Panc1 (cell line): ENCODE measurements at regions of chr13 and their contacts with region 1.

Region 1: GRCh38 chr13:48580185-48580803 is 47.4 kb upstream of the RCBTB2 start:
- DNase-seq: peak; percentile 45
- ATAC-seq: peak; percentile 65; the same call in 1 of the 2 replicates
- H3K4me3 ChIP-seq: no peak overlapping the region
- H3K27ac ChIP-seq: no peak overlapping the region
- H3K4me1 ChIP-seq: peaks cover 6% of the 10 kb centered on the region; the same call in 1 of the 2 replicates
- H3K27me3 ChIP-seq: no peaks in the 10 kb centered on the region
- CTCF ChIP-seq: peak; percentile 67; the same call in 1 of the 2 replicates

Region 2: DNA sequence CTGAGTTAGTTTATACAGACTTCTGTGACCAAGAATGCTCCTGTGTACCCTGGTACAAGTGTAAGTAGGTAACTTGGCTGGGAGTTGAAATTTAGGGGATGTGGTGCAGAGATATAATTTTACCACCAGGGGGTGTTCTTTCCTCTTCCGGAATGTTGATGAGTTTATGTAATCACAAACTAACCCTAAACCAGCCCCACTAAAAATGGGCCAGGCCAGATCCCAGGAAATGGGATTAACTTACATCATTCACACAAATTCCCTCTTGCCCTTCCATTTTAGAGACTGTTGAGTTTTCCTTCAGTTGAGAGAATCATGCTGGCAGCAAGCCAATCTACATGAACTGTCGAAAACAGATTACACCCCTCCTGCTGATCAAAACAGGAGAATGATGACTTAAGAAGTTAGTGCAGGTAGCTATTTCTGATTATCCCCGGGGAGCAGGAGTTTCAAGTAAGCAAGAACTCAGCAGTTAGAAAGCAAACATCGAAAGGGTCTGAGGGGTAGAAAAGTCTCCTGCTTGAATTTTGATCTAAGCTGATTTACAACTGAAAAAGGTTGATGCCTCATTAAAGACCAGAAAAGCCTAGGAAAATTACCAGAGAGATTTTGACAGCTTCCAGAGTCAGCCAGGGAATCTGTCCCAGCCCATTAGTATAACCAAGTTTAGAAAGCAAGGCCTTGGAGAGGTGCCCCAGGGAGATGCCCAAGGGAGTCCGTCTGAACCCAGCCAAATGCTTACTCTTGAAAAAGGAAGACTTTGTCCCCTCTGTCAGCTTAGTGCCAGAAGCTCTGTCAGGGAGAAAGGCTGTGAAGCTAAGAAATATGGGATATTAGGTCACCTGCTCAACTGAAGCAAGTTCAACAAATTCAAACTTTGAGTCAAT is 453.1 kb before region 1 on chr13:
- CTCF ChIA-PET with region 1: no interaction called
- POLR2A ChIA-PET with region 1: no interaction called
- in situ Hi-C with region 1: no loop called
- intact Hi-C with region 1: loop called (anchors 5 kb)
- DNase-seq: peak; percentile 42
- ATAC-seq: peak; percentile 70; the same call in 1 of the 2 replicates
- H3K4me3 ChIP-seq: no peak overlapping the region
- H3K27ac ChIP-seq: peak overlapping the region; percentile 13; the same call in 1 of the 2 replicates
- H3K4me1 ChIP-seq: no peaks in the 10 kb centered on the region
- H3K27me3 ChIP-seq: no peaks in the 10 kb centered on the region
- CTCF ChIP-seq: peak; percentile 75

Region 3: DNA sequence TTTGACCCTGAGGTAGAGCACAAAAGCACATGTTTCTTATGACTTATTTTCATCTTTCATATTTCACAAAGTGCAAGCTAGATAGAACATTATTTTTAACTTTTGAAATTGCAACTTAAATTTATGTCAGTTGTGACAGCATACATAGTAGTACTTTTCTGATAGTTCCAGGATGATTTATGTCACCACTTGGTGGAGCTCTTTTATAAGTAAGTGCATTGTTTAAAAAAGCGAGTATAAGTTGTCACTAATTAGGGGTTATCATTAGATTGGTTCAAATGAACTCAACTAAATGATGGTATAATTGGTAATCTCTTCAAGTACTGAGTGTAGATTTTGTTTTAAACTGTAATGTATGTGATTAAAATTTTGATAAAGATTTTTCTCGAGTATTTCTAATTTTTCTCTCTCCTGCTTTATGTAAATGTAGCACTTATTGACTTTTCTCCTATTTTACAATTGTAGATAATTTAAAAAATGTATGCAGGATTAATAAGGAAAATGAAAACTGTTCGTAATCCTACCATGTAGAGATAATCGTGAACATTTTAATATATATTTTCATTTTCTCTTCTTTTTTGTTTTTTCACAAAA is 245.7 kb before region 1 on chr13:
- CTCF ChIA-PET with region 1: interaction called, 5 read pairs
- POLR2A ChIA-PET with region 1: no interaction called
- in situ Hi-C with region 1: no loop called
- intact Hi-C with region 1: loop called (anchors 2 kb)
- DNase-seq: peak; percentile 1
- ATAC-seq: no peak
- H3K4me3 ChIP-seq: no peak overlapping the region
- H3K27ac ChIP-seq: no peak overlapping the region
- H3K4me1 ChIP-seq: no peaks in the 10 kb centered on the region
- H3K27me3 ChIP-seq: no peaks in the 10 kb centered on the region
- CTCF ChIP-seq: peak; percentile 40; the same call in 1 of the 2 replicates

Region 4: DNA sequence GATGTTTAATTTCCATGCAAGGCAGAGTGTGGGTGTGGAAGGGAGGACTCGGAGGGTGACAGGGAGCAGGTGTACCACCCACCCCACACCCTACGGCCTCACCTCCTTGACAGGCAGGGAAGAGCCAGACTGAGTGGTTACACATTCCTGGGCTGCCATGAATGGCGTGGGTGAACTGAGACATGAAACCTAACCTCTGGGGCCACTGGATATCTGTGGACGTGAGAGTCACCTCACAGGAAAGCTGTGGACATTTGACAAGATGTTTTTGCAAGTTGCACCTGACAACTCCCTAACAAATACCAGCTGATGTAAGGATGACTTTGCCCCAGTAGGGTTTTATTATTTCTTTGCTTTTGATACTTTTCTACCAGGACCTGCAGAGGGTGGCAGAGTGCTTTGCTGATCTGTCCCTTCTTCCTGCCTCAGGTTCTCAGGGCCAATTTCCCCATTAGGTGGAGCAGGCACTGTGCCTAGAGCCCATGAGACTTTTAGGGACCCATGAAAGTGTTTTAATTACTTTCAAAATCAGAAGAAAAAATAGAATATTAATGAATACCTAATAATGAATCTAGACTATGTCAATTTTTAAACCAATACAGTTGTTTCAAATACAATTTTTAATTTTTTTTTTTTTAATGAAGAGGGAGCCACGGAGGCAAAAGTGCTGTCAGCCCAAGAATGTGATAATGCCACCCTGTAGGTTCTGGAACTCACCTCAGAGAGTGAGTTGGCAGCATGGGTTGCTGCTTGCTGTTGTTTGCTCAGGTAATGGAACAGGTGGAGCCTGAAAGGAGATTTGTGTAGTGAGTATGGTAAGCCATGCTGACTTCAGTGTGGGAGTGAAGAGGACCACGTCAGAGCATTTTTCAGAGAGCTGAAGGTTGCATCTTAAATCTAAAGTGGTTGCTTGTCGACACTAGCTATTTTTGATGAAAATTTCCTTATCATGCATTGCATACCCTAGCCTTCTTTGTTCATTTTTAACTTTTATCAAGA is 15.4 kb after region 1 on chr13:
- CTCF ChIA-PET with region 1: no interaction called
- POLR2A ChIA-PET with region 1: no interaction called
- in situ Hi-C with region 1: no loop called
- intact Hi-C with region 1: no loop called
- DNase-seq: peak; percentile 43
- ATAC-seq: peak; percentile 92
- H3K4me3 ChIP-seq: no peak overlapping the region
- H3K27ac ChIP-seq: no peak overlapping the region; the same call in 1 of the 2 replicates
- H3K4me1 ChIP-seq: no peaks in the 10 kb centered on the region
- H3K27me3 ChIP-seq: no peaks in the 10 kb centered on the region
- CTCF ChIP-seq: peak; percentile 76